ENCODE measurements at regions of chr11 and their contacts with region 1.

Region 1: GRCh38 chr11:45285930-45286632 is at the start of gene SYT13:
- DNase-seq: peak; percentile 60
- H3K4me3 ChIP-seq: peak within 1 kb of the TSS; percentile 25 to 34
- H3K27ac ChIP-seq: peak within 1 kb of the TSS; percentile 2 to 28
- H3K4me1 ChIP-seq: no peaks in the 10 kb centered on the region
- H3K27me3 ChIP-seq: no peaks in the 10 kb centered on the region
- CTCF ChIP-seq: no peak
- POLR2A ChIP-seq: no peak
- total RNA-seq, gene SYT13: 0.80 to 4.8 TPM

Region 2: DNA sequence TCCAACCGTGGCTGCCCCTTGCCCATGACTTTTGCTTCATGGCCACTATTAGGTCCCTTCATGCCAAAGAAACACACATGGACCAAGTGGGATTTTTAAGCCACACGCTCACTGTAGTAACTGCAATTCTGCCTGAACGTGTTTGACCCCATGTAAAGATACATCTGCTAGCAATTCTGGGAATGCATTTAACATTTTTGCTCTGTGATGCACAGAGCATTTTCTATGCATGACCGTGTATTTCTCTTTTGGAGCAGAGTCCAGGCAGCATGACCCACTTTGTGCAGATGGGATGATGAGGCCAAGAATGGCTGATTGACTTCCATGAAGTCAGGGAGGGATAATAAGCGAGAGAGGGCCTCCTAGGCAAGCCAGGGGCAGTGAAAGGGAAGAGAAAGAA is 443.9 kb before region 1 on chr11:
- intact Hi-C with region 1: no loop called
- DNase-seq: no peak
- H3K4me3 ChIP-seq: no peak overlapping the region
- H3K27ac ChIP-seq: no peak overlapping the region
- H3K4me1 ChIP-seq: no peaks in the 10 kb centered on the region
- H3K27me3 ChIP-seq: no peaks in the 10 kb centered on the region
- CTCF ChIP-seq: no peak
- POLR2A ChIP-seq: no peak

Region 3: GRCh38 chr11:45238724-45239123 is 47.4 kb before region 1 on chr11:
- intact Hi-C with region 1: loop called (anchors 5 kb)
- DNase-seq: no peak
- H3K4me3 ChIP-seq: no peak overlapping the region
- H3K27ac ChIP-seq: no peak overlapping the region
- H3K4me1 ChIP-seq: no peaks in the 10 kb centered on the region
- H3K27me3 ChIP-seq: no peaks in the 10 kb centered on the region
- CTCF ChIP-seq: no peak
- POLR2A ChIP-seq: no peak